Thyroid gland (tissue), 4 donors: ENCODE measurements at regions of chrX and their contacts with region 1.

Region 1: DNA sequence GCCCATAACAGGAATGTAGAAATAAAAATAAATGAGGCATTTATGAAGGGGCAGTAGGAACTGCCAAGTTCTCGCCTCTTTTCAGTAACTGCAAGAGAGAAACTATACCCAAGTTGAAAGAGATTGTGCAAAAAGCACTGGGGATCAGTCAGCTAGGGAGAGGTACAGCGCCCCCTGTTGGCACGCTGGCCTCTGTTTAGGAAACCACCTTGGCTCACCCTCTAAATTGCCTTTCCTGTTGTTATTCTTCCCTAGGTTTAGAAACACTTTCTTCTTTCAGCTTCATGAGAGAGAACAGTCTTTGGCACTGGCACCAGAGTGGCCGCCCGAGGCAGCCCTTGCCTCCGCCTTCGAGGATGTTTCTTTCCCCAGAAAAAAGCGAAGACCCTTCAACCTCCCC is 348.5 kb downstream of the MID1IP1 start:
- DNase-seq: peak; percentile 65 to 78
- H3K4me3 ChIP-seq: no peak overlapping the region
- H3K27ac ChIP-seq: no peak overlapping the region
- H3K4me1 ChIP-seq: no peaks in the 10 kb centered on the region
- H3K27me3 ChIP-seq: no peaks in the 10 kb centered on the region
- CTCF ChIP-seq: peak; percentile 29 to 63 (median 44)
- POLR2A ChIP-seq: no peak

Region 2: DNA sequence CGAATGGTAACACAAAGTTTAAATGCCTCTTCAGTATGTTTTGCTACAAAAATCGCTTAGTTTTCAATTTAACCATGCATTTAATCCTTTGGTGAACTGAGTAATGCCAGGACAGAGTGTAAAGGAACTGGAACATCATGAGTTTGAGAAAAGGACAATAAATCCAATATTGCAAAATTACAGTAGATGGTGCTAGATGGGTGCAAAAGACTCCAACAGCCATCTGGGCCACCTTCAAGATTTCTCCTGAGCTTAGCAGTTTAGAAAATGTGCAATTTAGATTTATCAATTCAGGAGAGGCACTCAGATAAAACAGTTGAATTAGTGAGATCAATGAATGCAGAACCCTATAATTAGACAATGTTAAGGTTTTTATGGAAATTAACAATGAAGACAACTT is 381.7 kb before region 1 on chrX:
- intact Hi-C with region 1: loop called (anchors 10 kb)
- DNase-seq: no peak
- H3K4me3 ChIP-seq: no peak overlapping the region
- H3K27ac ChIP-seq: no peak overlapping the region
- H3K4me1 ChIP-seq: no peaks in the 10 kb centered on the region
- H3K27me3 ChIP-seq: no peaks in the 10 kb centered on the region
- CTCF ChIP-seq: peak in 3 of 6 experiments; percentile 32 to 54 (median 39)
- POLR2A ChIP-seq: no peak